ENCODE measurements at regions of chr19 and their contacts with region 1.

Region 1: DNA sequence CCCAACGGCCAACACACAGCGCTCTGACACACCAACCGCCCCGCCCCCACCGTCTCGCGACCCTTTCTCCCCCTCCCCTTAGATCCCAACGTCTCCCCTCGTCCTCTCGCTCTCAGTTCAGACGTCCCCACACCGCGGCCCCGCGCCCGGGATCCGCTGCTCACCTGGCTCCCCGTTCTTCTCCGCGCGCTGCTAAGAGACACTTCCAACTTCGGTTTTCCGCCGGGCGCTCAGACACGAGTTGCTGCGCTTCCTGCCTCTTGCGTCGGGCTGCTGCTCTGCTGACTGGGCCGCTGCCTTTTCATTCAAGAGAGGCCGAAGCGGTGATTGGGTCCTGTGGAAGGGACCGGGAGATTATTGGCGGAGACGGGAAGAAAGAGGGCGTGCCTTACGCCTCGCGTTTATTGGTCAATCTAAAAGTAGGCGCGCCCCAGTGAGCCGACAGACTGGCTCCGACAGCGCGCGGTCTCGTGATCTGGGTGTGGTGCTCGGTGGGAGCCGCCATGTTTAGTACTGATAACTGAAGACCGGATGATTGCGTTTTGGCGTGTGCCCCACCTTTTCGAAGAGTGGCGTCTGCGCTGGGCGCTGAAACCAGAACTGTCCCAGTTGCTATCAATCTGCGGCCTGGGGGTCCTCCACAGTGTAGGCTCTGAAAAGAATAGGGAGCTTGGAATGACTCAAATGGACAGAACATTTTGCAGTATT is at the start of gene DDX39A:
- DNase-seq: peak; percentile 100
- H3K27ac ChIP-seq: peak within 1 kb of the TSS; percentile 91
- CTCF ChIP-seq: no peak

Region 2: GRCh38 chr19:14300303-14300702 is 119.0 kb before region 1 on chr19:
- CTCF ChIA-PET with region 1: no interaction called
- POLR2A ChIA-PET with region 1: no interaction called
- DNase-seq: no peak
- H3K27ac ChIP-seq: no peak overlapping the region
- CTCF ChIP-seq: no peak

Region 3: DNA sequence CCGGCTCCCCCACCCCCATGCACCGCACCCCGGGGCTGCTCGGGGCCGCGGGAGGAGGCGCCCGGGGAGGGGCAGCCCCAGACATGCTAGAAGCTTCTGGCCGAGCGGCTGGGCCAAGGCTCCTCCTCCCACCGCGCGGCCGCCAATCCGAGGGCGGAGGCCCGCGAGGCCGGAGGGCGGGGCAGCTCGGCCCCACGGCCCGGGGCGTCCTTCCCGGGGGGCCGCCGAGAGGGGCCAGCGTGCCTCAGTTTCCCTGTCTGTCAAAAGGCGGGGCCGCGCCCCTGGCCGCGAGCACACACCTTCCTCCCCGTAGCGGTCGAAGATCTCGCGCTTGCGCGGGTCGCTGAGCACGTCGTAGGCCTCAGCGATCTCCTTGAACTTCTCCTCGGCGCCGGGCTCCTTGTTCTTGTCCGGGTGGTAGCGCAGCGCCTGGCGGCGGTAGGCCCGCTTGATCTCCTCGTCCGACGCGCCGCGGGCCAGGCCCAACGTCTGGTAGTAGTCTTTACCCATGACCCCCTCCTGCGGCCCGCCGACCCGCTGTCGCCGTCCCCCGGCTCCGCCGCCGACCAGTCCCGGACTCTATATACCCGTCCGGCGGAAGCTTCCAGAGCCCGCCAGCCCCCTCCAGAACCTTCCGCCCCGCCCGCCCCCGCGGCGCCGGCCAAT is 98.7 kb after region 1 on chr19 and contains the start of gene DNAJB1:
- CTCF ChIA-PET with region 1: no interaction called
- POLR2A ChIA-PET with region 1: interaction called, 13 read pairs
- DNase-seq: peak; percentile 83
- H3K27ac ChIP-seq: peak within 1 kb of the TSS; percentile 100
- CTCF ChIP-seq: no peak

Region 4: DNA sequence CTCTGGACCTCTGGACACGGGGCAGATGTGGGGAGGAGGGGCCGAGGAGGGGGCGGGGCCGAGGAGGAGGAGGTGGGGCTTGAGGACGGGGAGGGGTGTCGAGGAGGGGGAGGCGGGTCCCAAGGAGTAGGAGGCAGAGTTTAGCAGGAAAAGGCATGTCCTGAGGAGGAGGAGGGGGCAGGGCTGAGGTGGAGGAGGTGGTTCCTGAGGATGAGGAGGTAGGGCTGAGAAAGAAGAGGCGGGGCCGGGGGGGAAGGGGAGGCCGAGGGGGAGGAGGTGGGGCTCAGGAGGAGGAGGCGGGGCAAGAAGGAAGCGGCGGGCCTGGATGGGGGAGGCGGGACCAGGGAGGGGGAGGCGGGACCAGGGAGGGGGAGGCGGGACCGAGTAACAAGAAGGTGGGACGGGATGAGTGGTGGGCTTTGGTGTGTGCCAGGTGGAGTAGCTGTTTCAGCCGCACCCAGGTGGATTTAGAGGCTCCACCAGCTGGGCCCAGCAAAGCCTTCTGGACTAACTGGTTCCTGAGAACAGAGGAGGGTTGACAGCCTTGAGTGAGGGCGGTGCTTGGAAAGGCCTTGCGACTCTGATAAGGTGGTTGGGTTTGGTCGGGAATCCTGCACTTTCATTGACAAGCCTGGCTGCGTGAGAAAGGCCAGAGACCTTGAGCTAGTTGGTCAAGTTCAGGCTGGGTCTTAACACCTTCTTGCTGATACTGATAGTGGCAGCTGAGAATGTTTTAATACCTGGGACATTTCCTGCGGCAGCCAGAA is 117.8 kb after region 1 on chr19:
- CTCF ChIA-PET with region 1: no interaction called
- POLR2A ChIA-PET with region 1: no interaction called
- DNase-seq: peak; percentile 94
- H3K27ac ChIP-seq: peak overlapping the region; percentile 94
- CTCF ChIP-seq: no peak